Activated CD4-positive, alpha-beta T cell treated with anti-CD3 and anti-CD28 coated beads for 36 hours (primary cell): ENCODE measurements at regions of chr1 and their contacts with region 1.

Region 1: GRCh38 chr1:21294266-21294989 is 4.2 kb upstream of the ECE1 start:
- DNase-seq: peak; percentile 93
- ATAC-seq: peak; percentile 61
- H3K4me3 Mint-ChIP-seq: peak overlapping the region; percentile 86
- H3K27ac Mint-ChIP-seq: peak overlapping the region; percentile 97
- H3K4me1 Mint-ChIP-seq: peaks cover 86% of the 10 kb centered on the region
- H3K27me3 Mint-ChIP-seq: no peaks in the 10 kb centered on the region

Region 2: GRCh38 chr1:20786253-20787028 is 508.0 kb before region 1 on chr1:
- CTCF ChIA-PET with region 1: no interaction called
- POLR2A ChIA-PET with region 1: interaction called, 6 read pairs
- intact Hi-C with region 1: loop called in 1 of 2 experiments (anchors 1 kb)
- DNase-seq: peak; percentile 98
- ATAC-seq: peak; percentile 88
- H3K4me3 Mint-ChIP-seq: peak overlapping the region; percentile 96
- H3K27ac Mint-ChIP-seq: peak overlapping the region; percentile 96
- H3K4me1 Mint-ChIP-seq: peaks cover 29% of the 10 kb centered on the region
- H3K27me3 Mint-ChIP-seq: no peaks in the 10 kb centered on the region

Region 3: GRCh38 chr1:21176586-21177555 is 117.6 kb before region 1 on chr1 and contains the start of gene EIF4G3:
- CTCF ChIA-PET with region 1: no interaction called
- POLR2A ChIA-PET with region 1: no interaction called
- intact Hi-C with region 1: loop called in 1 of 2 experiments (anchors 2 kb)
- DNase-seq: peak; percentile 100
- ATAC-seq: peak; percentile 99
- H3K4me3 Mint-ChIP-seq: peak within 1 kb of the TSS; percentile 81
- H3K27ac Mint-ChIP-seq: peak within 1 kb of the TSS; percentile 92
- H3K4me1 Mint-ChIP-seq: peaks cover 25% of the 10 kb centered on the region
- H3K27me3 Mint-ChIP-seq: no peaks in the 10 kb centered on the region
- total RNA-seq, gene EIF4G3: 47.0 to 55.0 TPM

Region 4: GRCh38 chr1:21280011-21280471 is 14.4 kb before region 1 on chr1:
- CTCF ChIA-PET with region 1: interaction called, 3 read pairs
- POLR2A ChIA-PET with region 1: interaction called, 9 read pairs
- intact Hi-C with region 1: loop called in 1 of 2 experiments (anchors 2 kb)
- DNase-seq: no peak
- ATAC-seq: peak; percentile 19
- H3K4me3 Mint-ChIP-seq: peak overlapping the region; percentile 33
- H3K27ac Mint-ChIP-seq: peak overlapping the region; percentile 90
- H3K4me1 Mint-ChIP-seq: peaks cover 53% of the 10 kb centered on the region
- H3K27me3 Mint-ChIP-seq: no peaks in the 10 kb centered on the region

Region 5: DNA sequence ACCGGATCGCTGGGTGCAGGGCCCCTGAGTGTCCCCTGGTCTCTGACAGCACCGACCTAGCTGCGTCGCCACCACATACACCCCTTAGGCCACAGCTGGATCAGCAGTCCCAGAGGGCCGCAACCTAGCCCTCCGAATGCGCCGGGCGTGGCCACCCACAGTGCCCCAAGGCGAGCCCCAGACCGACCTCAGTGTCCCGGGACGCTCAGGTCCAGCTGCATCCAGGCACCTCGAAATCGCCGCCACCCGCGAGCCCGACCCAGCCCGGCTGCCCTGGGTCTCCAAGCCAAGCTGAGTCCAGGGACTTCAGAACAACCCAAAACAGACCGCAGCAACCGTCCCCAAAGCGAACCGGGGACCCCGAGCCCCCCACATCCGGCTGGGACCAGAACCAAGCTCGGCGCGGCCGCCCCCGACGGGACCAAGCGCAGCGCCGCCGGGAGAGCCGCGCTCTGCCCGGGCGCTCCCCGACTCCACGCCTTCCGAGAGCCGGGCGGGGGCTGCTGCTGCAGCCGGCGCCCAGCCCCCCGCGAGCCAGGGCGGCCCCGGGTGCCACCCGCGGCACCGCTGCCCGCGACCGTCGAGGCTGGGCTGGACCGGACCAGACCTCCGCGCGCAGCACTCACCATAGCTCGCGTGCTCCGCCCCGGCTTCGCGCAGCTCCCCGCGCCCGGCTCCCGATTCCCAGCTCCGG is 50.5 kb after region 1 on chr1:
- CTCF ChIA-PET with region 1: interaction called, 7 read pairs
- POLR2A ChIA-PET with region 1: interaction called, 13 read pairs
- intact Hi-C with region 1: loop called (anchors 1 kb)
- DNase-seq: peak; percentile 44
- ATAC-seq: peak; percentile 17
- H3K4me3 Mint-ChIP-seq: no peak overlapping the region
- H3K27ac Mint-ChIP-seq: peak overlapping the region; percentile 95
- H3K4me1 Mint-ChIP-seq: peaks cover 39% of the 10 kb centered on the region
- H3K27me3 Mint-ChIP-seq: no peaks in the 10 kb centered on the region

Region 6: DNA sequence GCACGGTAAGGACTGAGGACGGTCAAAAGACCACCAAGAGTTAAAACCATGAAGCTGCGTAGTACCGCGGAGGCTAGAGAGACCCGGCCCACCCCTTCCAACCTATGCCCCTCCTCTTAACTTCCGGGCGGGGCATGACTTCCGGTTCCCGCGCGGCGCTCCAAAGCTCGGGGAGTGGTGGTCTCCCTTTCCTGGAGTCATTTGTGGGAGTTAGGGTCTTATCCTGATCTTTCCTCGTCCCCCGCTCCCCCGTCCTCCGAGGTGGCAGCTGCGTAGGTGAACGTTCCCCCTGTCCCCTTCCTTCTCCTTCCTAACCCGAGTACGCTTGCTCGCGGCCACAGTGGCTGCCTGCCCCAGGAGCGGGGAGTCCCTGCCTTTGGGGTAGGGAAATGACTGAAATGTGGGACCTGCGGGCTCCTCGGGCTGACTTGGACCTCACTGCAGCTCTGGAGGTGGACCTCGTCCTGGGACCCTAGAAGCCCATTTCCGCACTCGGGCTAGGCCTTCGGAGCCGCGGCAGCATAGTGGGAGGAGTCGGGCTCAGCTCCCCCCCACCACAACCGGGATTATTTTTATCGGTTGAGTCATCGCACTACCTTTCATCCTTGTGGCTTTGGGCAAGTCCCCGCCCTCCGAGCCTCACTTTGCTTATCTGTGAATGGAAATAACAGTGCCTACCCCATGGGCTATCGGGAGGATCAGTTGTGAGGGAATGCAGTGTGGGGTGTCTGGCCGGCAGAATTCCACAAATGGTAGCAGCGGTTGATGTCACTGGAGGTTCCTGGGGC is 731.1 kb after region 1 on chr1:
- CTCF ChIA-PET with region 1: no interaction called
- POLR2A ChIA-PET with region 1: no interaction called
- intact Hi-C with region 1: loop called in 1 of 2 experiments (anchors 1 kb)
- DNase-seq: peak; percentile 94
- ATAC-seq: peak; percentile 74
- H3K4me3 Mint-ChIP-seq: peak overlapping the region; percentile 82
- H3K27ac Mint-ChIP-seq: peak overlapping the region; percentile 99
- H3K4me1 Mint-ChIP-seq: peaks cover 59% of the 10 kb centered on the region
- H3K27me3 Mint-ChIP-seq: no peaks in the 10 kb centered on the region